B cell (primary cell): ENCODE measurements at regions of chr11 and their contacts with region 1.

Region 1: GRCh38 chr11:75204685-75205563 is 35.6 kb upstream of the TPBGL start:
- DNase-seq: peak; percentile 65
- ATAC-seq: peak; percentile 62
- H3K4me3 ChIP-seq: no peak overlapping the region
- H3K4me3 Mint-ChIP-seq: no peak overlapping the region
- H3K27ac ChIP-seq: no peak overlapping the region
- H3K27ac Mint-ChIP-seq: no peak overlapping the region
- H3K4me1 ChIP-seq: no peaks in the 10 kb centered on the region
- H3K4me1 Mint-ChIP-seq: no peaks in the 10 kb centered on the region
- H3K27me3 ChIP-seq: peaks cover 0 to 8% (median 3%) of the 10 kb centered on the region in 4 experiments
- H3K27me3 Mint-ChIP-seq: peaks cover 28% of the 10 kb centered on the region
- CTCF ChIP-seq: peak; percentile 71

Region 2: DNA sequence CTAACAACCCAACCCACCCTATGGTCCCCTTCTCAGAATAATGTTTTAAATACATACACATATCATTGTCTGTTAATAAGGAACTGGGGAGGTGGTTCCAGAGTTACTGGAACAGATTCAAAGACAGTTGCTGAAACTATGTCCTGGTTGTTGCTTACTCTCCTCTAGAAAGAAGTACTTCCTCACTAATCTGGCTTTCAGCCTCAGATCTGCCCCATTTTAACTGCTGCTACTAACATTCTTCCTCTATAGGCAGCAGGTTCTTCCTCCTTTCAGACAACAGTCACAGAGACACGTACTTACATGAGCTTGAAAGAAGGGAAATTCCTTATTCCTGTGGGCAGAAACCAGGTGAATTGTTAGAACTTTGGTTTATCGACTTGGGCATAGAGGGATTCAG is 224.3 kb before region 1 on chr11:
- CTCF ChIA-PET with region 1: no interaction called
- POLR2A ChIA-PET with region 1: no interaction called
- intact Hi-C with region 1: no loop called
- DNase-seq: no peak
- ATAC-seq: no peak
- H3K4me3 ChIP-seq: no peak overlapping the region
- H3K4me3 Mint-ChIP-seq: no peak overlapping the region
- H3K27ac ChIP-seq: no peak overlapping the region
- H3K27ac Mint-ChIP-seq: no peak overlapping the region
- H3K4me1 ChIP-seq: no peaks in the 10 kb centered on the region
- H3K4me1 Mint-ChIP-seq: peaks cover 5% of the 10 kb centered on the region
- H3K27me3 ChIP-seq: no peaks in the 10 kb centered on the region
- H3K27me3 Mint-ChIP-seq: no peaks in the 10 kb centered on the region
- CTCF ChIP-seq: no peak

Region 3: GRCh38 chr11:75142714-75143419 is 62.1 kb before region 1 on chr11:
- CTCF ChIA-PET with region 1: interaction called, 89 read pairs
- POLR2A ChIA-PET with region 1: no interaction called
- intact Hi-C with region 1: loop called (anchors 1 kb)
- DNase-seq: peak; percentile 38
- ATAC-seq: peak; percentile 58
- H3K4me3 ChIP-seq: no peak overlapping the region
- H3K4me3 Mint-ChIP-seq: peak overlapping the region; percentile 8
- H3K27ac ChIP-seq: no peak overlapping the region
- H3K27ac Mint-ChIP-seq: no peak overlapping the region
- H3K4me1 ChIP-seq: peaks cover 8 to 19% of the 10 kb centered on the region in 2 donors
- H3K4me1 Mint-ChIP-seq: peaks cover 20% of the 10 kb centered on the region
- H3K27me3 ChIP-seq: peaks cover 0 to 3% (median 0%) of the 10 kb centered on the region in 4 experiments
- H3K27me3 Mint-ChIP-seq: peaks cover 19% of the 10 kb centered on the region
- CTCF ChIP-seq: no peak

Region 4: DNA sequence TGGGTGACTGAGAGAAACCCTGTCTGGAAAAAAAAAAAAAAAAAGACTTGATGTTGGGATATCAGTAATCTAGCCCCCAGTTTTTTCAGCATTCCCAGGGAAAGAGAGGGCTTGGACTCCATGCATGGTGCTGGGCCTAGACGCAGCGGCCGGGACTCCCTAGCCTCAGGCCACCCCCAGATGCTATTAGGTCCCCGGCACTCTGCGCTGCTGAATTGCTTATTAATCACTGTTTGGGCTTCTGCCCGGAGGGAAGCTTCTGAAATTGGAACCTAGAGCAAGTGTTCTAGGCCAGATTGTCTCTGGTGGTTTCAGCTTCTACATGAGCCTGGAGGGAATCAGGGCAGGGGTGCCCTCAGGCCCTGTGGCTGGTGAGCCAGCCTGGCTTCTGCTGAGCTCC is 15.0 kb before region 1 on chr11:
- CTCF ChIA-PET with region 1: interaction called, 5 read pairs
- POLR2A ChIA-PET with region 1: interaction called, 10 read pairs
- intact Hi-C with region 1: no loop called
- DNase-seq: no peak
- ATAC-seq: no peak
- H3K4me3 ChIP-seq: no peak overlapping the region
- H3K4me3 Mint-ChIP-seq: no peak overlapping the region
- H3K27ac ChIP-seq: no peak overlapping the region
- H3K27ac Mint-ChIP-seq: no peak overlapping the region
- H3K4me1 ChIP-seq: no peaks in the 10 kb centered on the region
- H3K4me1 Mint-ChIP-seq: no peaks in the 10 kb centered on the region
- H3K27me3 ChIP-seq: no peaks in the 10 kb centered on the region
- H3K27me3 Mint-ChIP-seq: peaks cover 7% of the 10 kb centered on the region
- CTCF ChIP-seq: no peak